Heart left ventricle (tissue), 16 donors: ENCODE measurements at regions of chr3 and their contacts with region 1.

Region 1: DNA sequence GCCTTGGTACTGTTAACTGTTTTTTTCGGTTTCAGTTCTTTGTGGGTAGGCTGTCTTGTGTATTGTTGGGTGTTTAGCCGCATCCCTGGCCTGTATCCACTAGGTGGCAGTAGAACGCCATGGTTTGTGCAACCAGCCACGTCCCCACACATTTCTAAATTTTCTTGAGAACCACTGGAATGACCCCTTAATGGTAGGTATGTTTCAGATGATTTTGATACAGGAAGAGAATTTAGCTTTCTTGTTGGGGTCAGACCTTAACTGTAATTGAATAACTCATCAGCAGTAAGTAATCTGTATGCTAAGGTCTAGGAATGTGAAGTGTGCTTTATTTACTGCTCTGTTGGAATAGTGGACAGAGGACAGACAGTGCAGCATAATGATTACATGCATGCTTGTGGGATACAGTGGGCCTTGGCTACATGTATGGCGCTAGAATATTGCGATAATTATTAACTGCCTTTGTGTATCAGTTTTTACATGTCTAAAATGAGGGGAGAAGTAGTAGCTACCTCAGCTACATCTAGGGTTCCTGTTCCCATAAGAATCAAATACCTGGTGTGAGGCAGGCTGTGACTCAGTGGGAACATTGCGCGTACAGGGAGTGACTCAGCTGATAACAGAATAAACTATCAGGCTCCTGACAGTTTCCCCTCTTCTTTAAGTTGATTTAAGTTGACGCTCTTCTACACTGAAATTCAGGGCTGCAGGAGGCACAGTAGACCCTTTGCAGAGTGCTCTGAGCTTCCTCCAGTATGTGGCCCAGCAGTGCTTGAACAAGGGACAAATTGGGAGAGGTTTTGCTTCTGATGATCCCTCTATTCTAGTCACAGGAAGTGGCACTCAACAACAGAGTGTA is 25.0 kb upstream of the GPR171 start:
- DNase-seq: peak; percentile 60 to 75 (median 70)
- ATAC-seq: peak; percentile 65 to 94 (median 88)
- H3K4me3 ChIP-seq: no peak overlapping the region
- H3K27ac ChIP-seq: peak overlapping the region in 11 of 12 donors; percentile 19 to 86 (median 62)
- H3K4me1 ChIP-seq: peaks cover 0 to 46% (median 14%) of the 10 kb centered on the region in 12 donors
- H3K27me3 ChIP-seq: no peaks in the 10 kb centered on the region
- CTCF ChIP-seq: peak; percentile 84 to 96 (median 90)
- POLR2A ChIP-seq: no peak

Region 2: DNA sequence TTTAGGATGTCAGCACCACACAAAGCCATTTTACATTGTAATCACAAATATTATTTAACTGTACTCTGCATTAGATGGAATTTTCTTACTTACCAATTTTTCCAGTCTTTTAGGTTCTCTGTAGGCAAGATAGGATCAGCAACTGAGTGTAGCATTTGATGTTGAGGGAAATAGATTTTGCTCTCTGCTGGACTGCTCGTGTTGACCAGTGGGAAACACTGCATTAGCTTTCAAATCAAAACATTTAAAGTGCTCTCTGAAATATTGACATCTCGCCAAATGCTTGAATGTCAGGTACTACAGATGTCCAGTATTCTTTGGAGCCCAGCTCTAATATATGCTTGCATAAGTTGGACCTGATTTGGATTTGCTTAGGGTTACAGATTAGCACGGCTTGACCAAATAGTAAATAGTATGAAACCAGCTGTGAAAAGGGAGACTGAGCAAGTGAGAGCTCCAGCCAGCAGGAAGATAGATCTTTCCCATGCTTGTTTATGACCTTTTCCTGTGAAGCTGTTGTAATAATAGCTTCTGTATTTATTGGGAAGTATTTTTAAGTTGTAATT is 20.8 kb after region 1 on chr3:
- intact Hi-C with region 1: no loop called
- DNase-seq: no peak
- ATAC-seq: peak in 3 of 4 donors; percentile 32 to 54 (median 46)
- H3K4me3 ChIP-seq: peak overlapping the region in 8 of 12 donors; percentile 6 to 45 (median 30)
- H3K27ac ChIP-seq: peak overlapping the region in 10 of 12 donors; percentile 4 to 68 (median 37)
- H3K4me1 ChIP-seq: peaks cover 0 to 22% (median 5%) of the 10 kb centered on the region in 12 donors
- H3K27me3 ChIP-seq: no peaks in the 10 kb centered on the region
- CTCF ChIP-seq: no peak
- POLR2A ChIP-seq: no peak

Region 3: DNA sequence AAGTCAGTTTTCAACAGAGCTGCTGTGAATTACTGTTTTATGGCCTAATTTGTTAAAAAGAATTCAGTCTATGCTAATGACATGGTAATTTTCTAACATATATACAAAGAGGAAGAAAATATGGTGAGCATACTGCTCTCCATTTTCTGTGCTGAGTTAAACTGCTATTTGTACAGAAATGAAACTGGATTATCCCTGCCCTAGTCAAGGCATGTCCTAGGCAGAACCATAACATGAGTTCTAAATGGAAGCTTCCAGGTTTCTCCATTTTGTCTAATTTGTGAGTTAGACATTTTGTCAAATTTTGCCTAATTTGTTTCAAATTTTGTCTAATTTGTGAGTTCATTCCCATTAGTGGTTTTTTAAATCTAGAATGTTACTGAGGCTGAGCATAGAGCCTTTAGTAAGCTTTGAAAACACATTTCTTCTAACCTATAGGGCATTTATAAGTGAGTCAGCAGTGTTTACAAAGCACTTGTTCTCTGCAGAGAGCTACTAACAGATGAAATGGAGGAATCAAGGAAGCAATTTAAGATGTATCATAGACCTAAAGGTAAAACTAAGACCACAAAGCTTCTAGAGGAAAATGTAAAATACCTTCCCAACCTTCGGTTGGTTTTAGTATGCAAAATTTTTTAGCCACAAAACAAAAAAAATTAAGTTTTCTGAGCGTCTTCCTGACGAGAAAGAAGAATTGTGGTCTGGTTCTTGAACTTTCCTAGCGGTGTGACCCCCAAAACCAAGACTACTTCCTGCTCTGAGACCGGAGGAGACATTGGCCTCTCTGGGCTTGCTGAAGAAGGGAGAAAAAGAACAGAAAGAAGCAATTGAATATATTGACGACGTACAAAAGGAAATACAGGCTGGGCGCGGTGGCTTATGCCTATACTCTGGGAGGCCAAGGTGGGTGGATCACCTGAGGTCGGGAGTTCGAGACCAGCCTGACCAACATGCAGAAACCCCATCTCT is 40.5 kb after region 1 on chr3:
- intact Hi-C with region 1: no loop called
- DNase-seq: no peak
- ATAC-seq: no peak
- H3K4me3 ChIP-seq: no peak overlapping the region
- H3K27ac ChIP-seq: peak overlapping the region in 7 of 12 donors; percentile 9 to 79 (median 33)
- H3K4me1 ChIP-seq: peaks cover 0 to 61% (median 4%) of the 10 kb centered on the region in 12 donors
- H3K27me3 ChIP-seq: no peaks in the 10 kb centered on the region
- CTCF ChIP-seq: no peak
- POLR2A ChIP-seq: no peak

Region 4: DNA sequence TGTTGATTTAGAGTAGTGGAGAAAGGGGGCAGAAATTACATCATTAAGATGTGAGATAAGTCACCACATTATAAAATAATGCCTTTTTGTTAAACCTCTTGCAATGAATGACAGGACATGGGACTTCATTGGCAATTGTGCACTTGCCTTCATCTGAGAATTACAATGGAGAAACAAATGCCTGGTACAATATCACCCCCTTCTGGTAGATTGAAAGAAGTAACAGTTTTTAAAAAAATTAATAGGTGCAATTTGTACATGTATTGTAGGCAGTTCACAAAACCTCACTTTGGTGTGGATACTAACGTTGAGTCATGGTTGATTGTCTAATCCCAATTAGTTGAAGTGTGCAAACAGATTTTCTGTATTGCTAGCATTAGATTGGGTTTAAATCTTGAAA is 54.9 kb after region 1 on chr3:
- intact Hi-C with region 1: loop called (anchors 1 to 5 kb)
- DNase-seq: no peak
- ATAC-seq: peak in 3 of 4 donors; percentile 54 to 73 (median 63)
- H3K4me3 ChIP-seq: no peak overlapping the region
- H3K27ac ChIP-seq: peak overlapping the region in 6 of 12 donors; percentile 6 to 74 (median 46)
- H3K4me1 ChIP-seq: peaks cover 0 to 35% (median 0%) of the 10 kb centered on the region in 12 donors
- H3K27me3 ChIP-seq: no peaks in the 10 kb centered on the region
- CTCF ChIP-seq: peak; percentile 48 to 81 (median 68)
- POLR2A ChIP-seq: no peak

Region 5: GRCh38 chr3:151327571-151328198 is 99.6 kb after region 1 on chr3:
- intact Hi-C with region 1: loop called in 2 of 10 experiments (anchors 2 to 5 kb)
- DNase-seq: no peak
- ATAC-seq: peak in 1 of 4 donors; percentile 51
- H3K4me3 ChIP-seq: peak overlapping the region in 8 of 12 donors; percentile 6 to 56 (median 24)
- H3K27ac ChIP-seq: peak overlapping the region in 2 of 12 donors; percentile 20 to 72
- H3K4me1 ChIP-seq: peaks cover 0 to 41% (median 0%) of the 10 kb centered on the region in 12 donors
- H3K27me3 ChIP-seq: no peaks in the 10 kb centered on the region
- CTCF ChIP-seq: peak; percentile 42 to 72 (median 60)
- POLR2A ChIP-seq: no peak